ENCODE measurements at regions of chr10 and their contacts with region 1.

Region 1: DNA sequence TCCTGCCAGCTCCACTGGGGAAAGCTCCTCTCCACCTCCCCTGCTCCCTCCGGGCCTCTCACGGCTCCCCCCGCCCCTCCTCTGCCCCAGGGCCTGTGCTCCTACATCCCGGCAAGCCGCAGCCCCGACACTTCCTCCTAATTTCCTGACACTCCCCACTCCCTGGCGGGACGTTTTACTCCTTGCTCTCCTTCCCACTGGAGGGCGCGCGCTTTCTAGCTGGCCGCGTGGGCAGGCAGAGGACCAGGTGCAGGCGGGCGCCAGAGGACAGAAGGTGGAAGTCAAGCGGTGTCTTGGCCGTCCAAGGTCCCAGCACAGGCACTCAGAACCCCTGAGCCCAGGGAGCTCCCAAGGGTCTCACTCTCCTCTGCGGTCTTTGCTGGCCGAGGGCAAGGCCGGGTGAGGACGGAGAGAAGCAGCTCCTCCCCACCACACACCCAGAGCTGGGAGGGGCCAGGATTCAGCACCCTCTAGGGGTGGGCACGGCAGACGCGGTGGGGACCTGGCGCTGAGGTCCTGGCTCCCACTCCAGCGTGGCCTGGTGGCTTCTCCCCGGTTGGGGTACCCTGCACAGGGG is 19.1 kb downstream of the ADAM8 start:
- DNase-seq: peak; percentile 69
- ATAC-seq: peak; percentile 79
- H3K4me3 Mint-ChIP-seq: peak overlapping the region; percentile 75
- H3K27ac Mint-ChIP-seq: 0 out of 2 replicates have a peak overlapping the region, but pooled peaks have one; percentile 57
- H3K4me1 Mint-ChIP-seq: peaks cover 13% of the 10 kb centered on the region
- H3K27me3 Mint-ChIP-seq: peaks cover 3% of the 10 kb centered on the region
- CTCF ChIP-seq: no peak

Region 2: DNA sequence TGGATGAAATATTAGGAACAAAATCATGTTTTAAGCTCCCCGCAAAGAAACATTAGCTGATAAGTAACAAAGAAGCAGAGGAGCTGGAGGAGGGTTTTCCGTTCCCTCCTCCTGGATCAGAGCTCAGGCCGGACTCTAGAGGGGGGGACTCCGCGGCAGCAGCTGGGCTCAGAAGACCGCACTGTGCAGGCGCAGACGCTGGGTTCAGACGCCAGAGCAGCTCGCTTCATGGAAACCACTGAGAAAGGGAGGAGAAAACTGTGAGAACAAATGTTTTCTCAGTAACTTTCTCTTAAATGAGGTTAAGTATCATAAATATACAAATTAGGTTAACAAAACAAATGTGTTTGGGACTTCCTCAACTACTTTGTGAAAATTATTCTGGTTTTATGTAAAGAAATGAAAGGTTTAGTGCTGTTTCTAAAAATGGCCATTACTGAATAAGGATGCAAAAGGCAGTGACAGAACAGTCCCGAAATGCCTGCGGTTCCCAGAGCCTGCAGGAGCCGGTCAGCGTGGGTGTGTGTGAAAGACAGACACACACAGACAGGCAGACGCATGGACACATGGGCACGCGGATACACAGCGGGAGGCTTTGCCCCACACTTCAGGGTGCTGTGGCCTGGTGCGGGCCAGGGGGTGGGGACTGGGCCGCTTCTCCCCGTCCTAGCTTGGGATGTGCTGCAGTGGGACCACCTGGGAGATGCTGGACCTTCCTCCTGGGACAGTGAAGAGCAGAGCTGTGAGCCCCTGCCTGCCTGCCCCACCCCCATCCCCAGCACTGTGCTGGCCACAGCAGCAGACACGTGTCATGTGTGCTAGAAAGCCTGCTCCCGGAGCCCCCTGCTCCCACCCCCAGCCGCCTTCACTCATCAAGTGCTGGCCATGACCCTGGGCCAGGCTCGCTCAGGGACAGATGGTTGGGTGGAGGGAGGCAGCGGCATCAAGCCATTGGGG is 190.2 kb before region 1 on chr10:
- CTCF ChIA-PET with region 1: no interaction called
- POLR2A ChIA-PET with region 1: no interaction called
- DNase-seq: no peak
- ATAC-seq: no peak
- H3K4me3 Mint-ChIP-seq: no peak overlapping the region
- H3K27ac Mint-ChIP-seq: no peak overlapping the region
- H3K4me1 Mint-ChIP-seq: no peaks in the 10 kb centered on the region
- H3K27me3 Mint-ChIP-seq: no peaks in the 10 kb centered on the region
- CTCF ChIP-seq: no peak

Region 3: GRCh38 chr10:133221331-133221730 is 36.2 kb before region 1 on chr10:
- CTCF ChIA-PET with region 1: no interaction called
- POLR2A ChIA-PET with region 1: no interaction called
- DNase-seq: no peak
- ATAC-seq: no peak
- H3K4me3 Mint-ChIP-seq: peak overlapping the region; percentile 24; the same call in 1 of the 2 replicates
- H3K27ac Mint-ChIP-seq: peak overlapping the region; percentile 82
- H3K4me1 Mint-ChIP-seq: peaks cover 22% of the 10 kb centered on the region
- H3K27me3 Mint-ChIP-seq: no peaks in the 10 kb centered on the region
- CTCF ChIP-seq: no peak

Region 4: GRCh38 chr10:133245439-133246235 is 11.9 kb before region 1 on chr10:
- CTCF ChIA-PET with region 1: interaction called, 61 read pairs
- POLR2A ChIA-PET with region 1: interaction called, 3 read pairs
- DNase-seq: no peak
- ATAC-seq: no peak
- H3K4me3 Mint-ChIP-seq: no peak overlapping the region
- H3K27ac Mint-ChIP-seq: no peak overlapping the region
- H3K4me1 Mint-ChIP-seq: peaks cover 40% of the 10 kb centered on the region
- H3K27me3 Mint-ChIP-seq: no peaks in the 10 kb centered on the region
- CTCF ChIP-seq: no peak

Region 5: GRCh38 chr10:133267829-133268228 is 10.3 kb after region 1 on chr10:
- CTCF ChIA-PET with region 1: interaction called, 10 read pairs
- POLR2A ChIA-PET with region 1: no interaction called
- DNase-seq: peak; percentile 44
- ATAC-seq: peak; percentile 49
- H3K4me3 Mint-ChIP-seq: no peak overlapping the region
- H3K27ac Mint-ChIP-seq: no peak overlapping the region
- H3K4me1 Mint-ChIP-seq: no peaks in the 10 kb centered on the region
- H3K27me3 Mint-ChIP-seq: peaks cover 13% of the 10 kb centered on the region
- CTCF ChIP-seq: no peak

Region 6: DNA sequence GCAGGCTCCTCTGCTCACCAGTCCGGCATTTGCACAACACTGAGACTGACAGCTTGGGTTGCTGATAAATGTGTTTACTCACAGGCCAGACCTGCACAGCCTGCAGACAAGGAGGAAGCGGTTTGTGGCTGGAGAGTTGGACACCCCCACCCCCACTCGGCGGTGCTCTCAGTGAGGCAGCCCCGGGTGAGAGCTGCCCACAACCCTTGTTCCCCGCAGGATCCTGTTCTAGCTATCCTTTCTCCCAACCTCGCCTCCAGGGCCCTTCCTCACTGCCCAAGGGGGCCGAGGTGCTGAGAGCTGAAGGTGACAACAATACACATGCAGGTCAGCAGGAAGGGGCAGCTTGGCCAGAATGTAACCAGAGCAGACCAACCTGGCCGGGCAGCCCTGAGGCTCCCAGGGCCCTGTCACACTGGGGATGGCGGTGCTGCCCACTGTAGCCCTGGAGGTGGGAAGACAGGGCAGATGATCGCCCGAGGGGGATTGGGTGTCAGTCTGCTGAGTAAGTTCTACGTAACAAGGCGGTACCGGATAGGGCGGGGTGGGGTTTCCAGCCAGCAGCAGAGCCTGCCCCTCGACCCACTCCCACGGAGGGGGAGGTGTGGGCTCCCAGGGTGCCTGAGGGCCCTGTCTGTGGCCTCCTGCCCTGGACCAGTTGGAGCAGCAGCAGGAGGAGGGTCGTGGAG is 21.1 kb after region 1 on chr10:
- CTCF ChIA-PET with region 1: interaction called, 14 read pairs
- POLR2A ChIA-PET with region 1: no interaction called
- DNase-seq: no peak
- ATAC-seq: no peak
- H3K4me3 Mint-ChIP-seq: no peak overlapping the region
- H3K27ac Mint-ChIP-seq: peak overlapping the region; percentile 57
- H3K4me1 Mint-ChIP-seq: peaks cover 6% of the 10 kb centered on the region; the same call in 1 of the 2 replicates
- H3K27me3 Mint-ChIP-seq: no peaks in the 10 kb centered on the region
- CTCF ChIP-seq: no peak

Region 7: DNA sequence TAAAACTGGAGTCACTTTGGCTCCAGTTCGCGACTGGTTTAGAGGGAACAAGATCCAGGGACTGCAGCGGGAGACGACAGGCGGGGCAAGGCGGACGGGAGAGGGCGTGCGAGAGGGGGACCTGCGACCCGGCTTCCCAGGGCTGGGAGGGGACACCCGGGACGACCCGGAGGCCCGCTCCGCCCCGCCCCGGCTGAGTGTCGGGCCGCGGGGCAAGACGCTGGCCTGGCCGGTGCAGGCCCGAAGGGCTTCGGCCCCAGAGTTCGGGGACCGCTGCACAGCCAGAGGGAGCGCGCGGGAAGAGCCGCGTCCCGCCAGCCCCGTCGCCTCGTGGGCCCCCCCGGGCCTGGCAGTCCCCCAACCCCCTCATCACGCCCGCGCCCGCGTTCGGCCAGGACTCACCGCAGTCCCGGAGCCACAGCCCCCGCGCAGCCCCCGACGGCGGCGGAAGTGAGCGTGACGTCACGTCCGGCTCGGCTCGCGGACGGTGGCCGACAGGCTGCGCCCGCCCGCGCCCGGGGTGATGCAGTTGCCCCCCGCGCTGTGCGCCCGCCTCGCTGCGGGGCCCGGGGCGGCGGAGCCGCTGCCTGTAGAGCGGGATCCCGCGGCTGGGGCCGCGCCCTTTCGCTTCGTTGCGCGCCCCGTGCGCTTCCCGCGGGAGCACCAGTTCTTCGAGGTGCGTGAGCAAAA is 51.0 kb after region 1 on chr10 and contains the starts of genes TUBGCP2 and ZNF511:
- CTCF ChIA-PET with region 1: interaction called, 13 read pairs
- POLR2A ChIA-PET with region 1: no interaction called
- DNase-seq: peak; percentile 78
- ATAC-seq: peak; percentile 58
- H3K4me3 Mint-ChIP-seq: peak within 1 kb of the TSS; percentile 97
- H3K27ac Mint-ChIP-seq: peak within 1 kb of the TSS; percentile 93
- H3K4me1 Mint-ChIP-seq: peaks cover 15% of the 10 kb centered on the region
- H3K27me3 Mint-ChIP-seq: no peaks in the 10 kb centered on the region
- CTCF ChIP-seq: no peak
- total RNA-seq, gene TUBGCP2: 53.2 to 62.5 TPM (median 53.8 TPM) in 3 replicates
- total RNA-seq, gene ZNF511: 69.6 to 86.4 TPM (median 73.2 TPM) in 3 replicates

Measured in WTC11 (cell line).